Calu3 (cell line): ENCODE measurements at regions of chr3 and their contacts with region 1.

Region 1: DNA sequence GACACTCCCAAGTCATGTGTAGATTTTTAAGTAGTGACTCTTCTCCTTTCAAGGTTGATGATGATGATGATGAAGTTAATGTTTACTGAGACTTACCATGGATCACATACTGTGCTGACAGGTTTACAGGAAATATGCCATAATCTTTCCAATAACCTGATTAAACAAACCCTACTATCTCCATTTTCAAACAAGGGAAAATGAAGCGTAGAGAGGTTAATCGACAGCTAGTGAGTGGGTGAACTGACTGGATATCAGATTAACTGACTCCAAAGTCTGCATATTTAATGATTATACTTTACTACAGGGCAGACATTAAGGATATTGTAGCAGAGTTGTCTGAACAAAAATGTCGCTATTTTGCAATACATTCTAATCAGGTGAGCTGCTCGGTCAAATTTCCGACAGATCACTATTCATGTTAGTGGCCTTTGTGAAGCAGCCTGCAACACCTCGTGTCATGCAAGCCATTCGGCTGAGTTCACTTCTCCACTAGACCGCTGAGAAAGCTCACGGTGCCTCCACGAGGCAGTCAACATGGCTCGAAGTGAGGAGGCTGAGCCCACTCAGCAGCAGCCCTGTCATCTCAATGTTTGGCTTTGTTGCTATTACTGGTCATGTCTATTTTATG is 264.2 kb downstream of the NFKBIZ start:
- DNase-seq: peak; percentile 79
- H3K4me3 Mint-ChIP-seq: peak overlapping the region; percentile 30
- H3K27ac Mint-ChIP-seq: peak overlapping the region; percentile 97
- H3K4me1 Mint-ChIP-seq: peaks cover 44% of the 10 kb centered on the region
- H3K27me3 Mint-ChIP-seq: no peaks in the 10 kb centered on the region
- CTCF ChIP-seq: no peak

Region 2: DNA sequence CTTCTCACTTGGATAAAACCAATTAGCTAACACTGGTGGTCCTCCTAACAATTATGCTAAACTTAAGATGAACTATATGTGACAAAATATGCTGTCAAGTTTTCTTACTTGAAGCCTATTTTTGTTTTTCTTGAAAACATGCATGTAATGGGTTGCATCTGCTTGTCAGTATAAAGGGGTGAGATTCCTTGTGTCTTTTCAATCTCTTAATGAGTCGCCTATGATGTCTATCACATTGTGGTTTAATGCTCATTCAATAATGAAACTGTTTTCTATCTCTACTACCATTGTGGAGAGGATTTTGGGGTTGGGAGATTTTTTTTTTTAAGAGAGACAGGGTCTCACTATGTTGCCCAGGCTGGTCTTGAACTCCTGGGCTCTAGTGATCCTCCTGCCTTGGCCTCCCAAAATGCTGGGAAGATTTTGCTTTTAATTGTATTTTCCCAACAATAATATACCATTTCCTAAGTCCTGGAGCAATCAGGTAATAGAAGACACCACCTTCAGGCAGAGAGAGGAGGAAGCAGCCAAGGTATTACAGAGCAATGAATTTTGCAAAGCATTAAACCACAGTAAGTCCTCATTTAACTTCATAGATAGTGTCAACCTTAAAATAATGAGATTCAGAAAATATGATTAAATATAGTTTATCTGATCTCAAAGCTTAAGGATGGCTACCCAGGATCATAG is 569.2 kb before region 1 on chr3:
- CTCF ChIA-PET with region 1: no interaction called
- intact Hi-C with region 1: no loop called
- DNase-seq: no peak
- H3K4me3 Mint-ChIP-seq: no peak overlapping the region
- H3K27ac Mint-ChIP-seq: no peak overlapping the region
- H3K4me1 Mint-ChIP-seq: no peaks in the 10 kb centered on the region
- H3K27me3 Mint-ChIP-seq: peaks cover 11% of the 10 kb centered on the region
- CTCF ChIP-seq: no peak

Region 3: DNA sequence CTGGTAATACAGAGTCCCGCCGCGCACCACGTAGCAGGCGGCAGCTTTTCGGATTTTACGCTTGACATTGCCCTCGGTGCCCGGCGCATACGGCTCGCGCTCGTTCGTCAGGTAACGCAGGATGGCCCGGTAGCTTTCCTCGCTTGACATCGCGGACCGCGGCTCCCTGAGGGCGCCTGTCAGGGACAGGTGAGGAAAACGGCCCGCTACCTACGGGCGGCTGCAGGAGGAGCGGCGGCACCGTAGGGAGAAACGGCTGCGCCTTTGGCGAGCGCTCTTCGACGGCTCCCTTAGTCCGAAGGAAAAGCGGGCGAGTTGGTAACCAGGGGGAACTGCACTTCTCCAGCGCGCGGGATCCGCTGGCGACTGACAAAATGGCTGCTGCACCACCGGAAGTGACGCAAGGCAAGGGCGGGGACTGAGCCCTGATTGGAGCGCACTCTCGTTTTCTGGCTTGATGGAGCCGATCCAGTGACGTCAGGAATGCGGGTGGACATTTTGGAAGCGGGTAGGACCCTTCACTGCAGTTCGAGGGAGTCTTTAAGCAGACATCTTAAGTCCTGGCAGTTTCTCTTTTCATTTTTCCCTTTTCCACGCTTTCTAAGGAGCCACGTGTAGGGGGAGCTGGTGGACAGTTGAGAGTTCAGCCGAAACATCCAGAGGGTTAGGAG is 436.6 kb before region 1 on chr3 and contains the start of gene ZBTB11:
- CTCF ChIA-PET with region 1: no interaction called
- intact Hi-C with region 1: loop called (anchors 5 kb)
- DNase-seq: peak; percentile 99
- H3K4me3 Mint-ChIP-seq: peak within 1 kb of the TSS; percentile 80
- H3K27ac Mint-ChIP-seq: peak within 1 kb of the TSS; percentile 85
- H3K4me1 Mint-ChIP-seq: peaks cover 23% of the 10 kb centered on the region
- H3K27me3 Mint-ChIP-seq: no peaks in the 10 kb centered on the region
- CTCF ChIP-seq: no peak
- total RNA-seq, gene ZBTB11: 34.8 and 36.5 TPM in 2 replicates

Region 4: DNA sequence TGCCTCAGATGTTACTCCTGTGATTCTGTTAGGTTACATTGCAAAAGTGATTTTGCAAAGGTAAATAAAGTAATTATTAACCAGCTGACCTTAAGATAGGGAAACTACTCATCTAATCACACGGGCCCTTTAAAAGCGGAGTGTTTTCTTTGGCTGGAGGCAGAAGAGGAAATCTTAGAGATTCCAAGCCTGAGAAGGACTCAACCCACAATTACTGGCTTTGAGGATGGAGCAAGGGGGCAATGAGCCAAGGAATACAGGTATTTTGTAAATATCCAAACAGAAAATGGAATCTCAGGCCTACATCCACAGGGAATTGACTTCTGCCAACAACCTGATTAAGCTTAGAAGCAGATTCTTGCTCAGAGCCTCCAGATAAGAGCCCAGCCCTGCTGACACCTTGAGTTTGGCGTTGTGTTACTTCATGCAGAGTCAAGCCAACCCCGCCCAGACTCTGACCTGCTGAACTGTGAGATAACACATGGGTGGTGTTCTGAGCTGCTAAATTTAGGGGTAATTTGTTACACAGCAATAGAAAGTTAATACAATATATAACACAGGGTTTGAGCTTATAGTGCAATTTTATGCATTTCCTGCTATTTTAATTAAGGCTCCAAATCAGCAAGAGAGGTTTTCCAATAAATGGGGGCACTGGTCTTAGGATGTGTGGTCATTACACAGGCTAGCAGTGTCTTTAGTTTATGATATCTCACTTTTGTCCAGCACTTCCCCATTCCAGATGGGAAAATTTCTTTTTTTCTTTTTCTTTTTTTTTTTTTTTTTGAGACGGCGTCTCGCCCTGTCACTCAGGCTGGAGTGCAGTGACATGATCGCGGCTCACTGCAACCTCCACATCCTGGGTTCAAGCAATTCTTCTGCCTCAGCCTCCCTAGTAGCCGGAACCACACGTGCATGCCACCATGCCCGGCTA is 244.7 kb before region 1 on chr3:
- CTCF ChIA-PET with region 1: no interaction called
- intact Hi-C with region 1: loop called (anchors 2 kb)
- DNase-seq: peak; percentile 50
- H3K4me3 Mint-ChIP-seq: peak overlapping the region; percentile 28
- H3K27ac Mint-ChIP-seq: peak overlapping the region; percentile 95
- H3K4me1 Mint-ChIP-seq: peaks cover 51% of the 10 kb centered on the region
- H3K27me3 Mint-ChIP-seq: no peaks in the 10 kb centered on the region
- CTCF ChIP-seq: no peak

Region 5: DNA sequence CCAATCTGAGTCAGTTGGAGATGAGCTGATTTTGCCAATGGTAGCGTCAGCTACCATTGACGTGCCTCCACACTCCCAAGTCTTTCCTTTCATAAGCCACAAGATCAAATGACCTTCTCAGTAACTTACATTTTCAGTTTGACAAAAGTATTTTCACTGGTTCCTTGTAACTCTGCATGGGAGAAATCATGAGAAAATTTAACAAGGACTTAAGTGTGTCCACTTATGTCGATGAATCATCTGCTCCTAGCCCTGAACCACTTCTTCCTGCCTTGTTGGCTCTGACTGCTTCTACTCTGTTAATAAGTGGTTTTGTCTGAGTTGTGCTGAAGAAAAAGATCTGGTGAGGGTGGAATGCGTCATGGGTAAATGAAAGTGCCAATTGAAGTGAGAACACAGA is 163.0 kb before region 1 on chr3:
- CTCF ChIA-PET with region 1: no interaction called
- intact Hi-C with region 1: loop called (anchors 2 kb)
- DNase-seq: peak; percentile 59
- H3K4me3 Mint-ChIP-seq: peak overlapping the region; percentile 38
- H3K27ac Mint-ChIP-seq: peak overlapping the region; percentile 93
- H3K4me1 Mint-ChIP-seq: peaks cover 42% of the 10 kb centered on the region
- H3K27me3 Mint-ChIP-seq: no peaks in the 10 kb centered on the region
- CTCF ChIP-seq: no peak

Region 6: GRCh38 chr3:102158080-102158756 is 44.7 kb after region 1 on chr3:
- CTCF ChIA-PET with region 1: no interaction called
- intact Hi-C with region 1: loop called (anchors 1 kb)
- DNase-seq: no peak
- H3K4me3 Mint-ChIP-seq: no peak overlapping the region
- H3K27ac Mint-ChIP-seq: peak overlapping the region; percentile 21
- H3K4me1 Mint-ChIP-seq: peaks cover 48% of the 10 kb centered on the region
- H3K27me3 Mint-ChIP-seq: no peaks in the 10 kb centered on the region
- CTCF ChIP-seq: no peak

Region 7: GRCh38 chr3:102180291-102181039 is 66.9 kb after region 1 on chr3:
- CTCF ChIA-PET with region 1: interaction called, 7 read pairs
- intact Hi-C with region 1: loop called (anchors 1 kb)
- DNase-seq: no peak
- H3K4me3 Mint-ChIP-seq: no peak overlapping the region
- H3K27ac Mint-ChIP-seq: no peak overlapping the region
- H3K4me1 Mint-ChIP-seq: peaks cover 23% of the 10 kb centered on the region
- H3K27me3 Mint-ChIP-seq: no peaks in the 10 kb centered on the region
- CTCF ChIP-seq: no peak